Astrocyte of the cerebellum (primary cell): ENCODE measurements at regions of chr18 and their contacts with region 1.

Region 1: GRCh38 chr18:10205151-10205550 is 249.3 kb upstream of the APCDD1 start:
- DNase-seq: no peak
- H3K4me3 ChIP-seq: no peak overlapping the region
- CTCF ChIP-seq: no peak

Region 2: GRCh38 chr18:9240270-9240669 is 964.9 kb before region 1 on chr18:
- in situ Hi-C with region 1: no loop called
- DNase-seq: no peak
- H3K4me3 ChIP-seq: no peak overlapping the region
- CTCF ChIP-seq: no peak

Region 3: DNA sequence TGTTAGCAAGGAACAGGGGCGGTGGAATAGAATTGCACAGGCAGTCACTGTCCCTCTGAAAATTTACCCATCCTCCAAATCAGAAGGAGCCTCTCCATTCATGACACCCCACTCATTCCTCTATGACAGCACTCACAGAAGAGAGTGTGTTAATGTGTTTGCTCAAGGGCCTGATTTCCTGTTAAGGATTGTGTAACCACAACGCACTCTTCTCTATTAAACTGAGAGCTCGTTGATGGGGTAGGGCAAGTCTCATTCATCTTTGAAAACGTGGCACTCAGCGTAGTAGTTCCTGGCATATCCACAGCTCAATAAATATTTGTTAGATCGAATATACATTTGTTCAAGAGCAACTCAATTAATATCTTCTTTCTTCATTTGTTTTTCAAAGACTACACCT is 185.0 kb before region 1 on chr18:
- in situ Hi-C with region 1: no loop called
- DNase-seq: no peak
- H3K4me3 ChIP-seq: no peak overlapping the region
- CTCF ChIP-seq: no peak

Region 4: DNA sequence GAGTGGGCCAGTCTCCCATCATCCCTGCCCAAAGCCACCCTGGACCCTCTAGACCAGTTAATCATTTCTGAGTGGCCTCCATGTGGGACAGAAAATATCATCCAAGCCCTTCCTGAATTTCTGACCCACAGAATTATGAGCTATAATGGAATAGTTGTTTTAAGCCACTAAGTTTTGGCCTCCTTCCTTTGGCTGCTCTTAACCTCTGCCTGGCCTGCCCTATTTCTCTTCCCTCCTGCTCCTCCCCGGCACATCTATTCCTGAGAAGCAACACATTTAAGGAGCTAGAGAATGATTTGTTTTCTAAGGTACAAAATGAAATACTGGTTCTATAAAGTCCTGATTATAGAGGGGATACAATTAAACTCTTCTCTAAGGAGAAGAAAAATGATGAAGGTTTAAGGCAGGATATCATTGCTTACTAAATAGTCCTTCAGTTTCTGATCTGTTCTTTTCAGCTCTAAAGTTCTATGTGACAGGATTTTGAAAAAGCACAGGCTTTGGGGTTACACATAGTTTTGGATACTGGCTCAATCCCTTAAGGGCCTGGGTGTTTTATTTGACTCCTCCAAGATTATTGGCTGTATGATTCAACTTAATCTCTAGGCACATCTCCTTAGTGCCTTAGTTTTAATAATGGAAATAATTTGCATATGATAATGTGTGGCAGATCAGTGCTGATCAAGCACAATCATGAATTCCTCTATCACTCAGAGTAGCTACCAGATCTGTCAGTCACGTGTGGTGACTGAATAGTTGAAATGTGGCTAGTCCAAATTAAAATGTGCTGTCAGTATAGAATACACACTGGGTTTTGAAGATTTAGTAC is 51.0 kb before region 1 on chr18:
- in situ Hi-C with region 1: no loop called
- DNase-seq: no peak
- H3K4me3 ChIP-seq: no peak overlapping the region
- CTCF ChIP-seq: no peak

Region 5: DNA sequence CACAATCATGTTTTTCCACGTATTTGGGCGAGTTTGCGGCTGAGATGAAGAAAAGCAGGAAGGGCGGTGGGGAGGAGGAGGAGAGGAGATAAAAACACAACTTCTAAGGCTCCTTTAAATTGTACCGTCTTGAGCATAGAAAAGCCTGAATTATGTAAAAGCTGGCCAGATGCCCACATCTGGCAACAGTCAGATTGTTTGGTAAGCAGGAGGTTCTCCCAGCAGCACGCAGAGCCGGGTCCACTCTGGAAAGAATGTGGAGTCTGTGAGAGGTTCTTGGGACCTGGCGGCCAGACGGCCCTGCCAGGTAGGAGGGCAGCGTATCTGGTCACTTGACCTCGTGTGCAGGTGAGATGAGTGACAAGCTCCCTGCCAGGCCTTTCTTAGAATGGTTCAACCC is 34.0 kb after region 1 on chr18:
- in situ Hi-C with region 1: no loop called
- DNase-seq: no peak
- H3K4me3 ChIP-seq: no peak overlapping the region
- CTCF ChIP-seq: no peak

Region 6: DNA sequence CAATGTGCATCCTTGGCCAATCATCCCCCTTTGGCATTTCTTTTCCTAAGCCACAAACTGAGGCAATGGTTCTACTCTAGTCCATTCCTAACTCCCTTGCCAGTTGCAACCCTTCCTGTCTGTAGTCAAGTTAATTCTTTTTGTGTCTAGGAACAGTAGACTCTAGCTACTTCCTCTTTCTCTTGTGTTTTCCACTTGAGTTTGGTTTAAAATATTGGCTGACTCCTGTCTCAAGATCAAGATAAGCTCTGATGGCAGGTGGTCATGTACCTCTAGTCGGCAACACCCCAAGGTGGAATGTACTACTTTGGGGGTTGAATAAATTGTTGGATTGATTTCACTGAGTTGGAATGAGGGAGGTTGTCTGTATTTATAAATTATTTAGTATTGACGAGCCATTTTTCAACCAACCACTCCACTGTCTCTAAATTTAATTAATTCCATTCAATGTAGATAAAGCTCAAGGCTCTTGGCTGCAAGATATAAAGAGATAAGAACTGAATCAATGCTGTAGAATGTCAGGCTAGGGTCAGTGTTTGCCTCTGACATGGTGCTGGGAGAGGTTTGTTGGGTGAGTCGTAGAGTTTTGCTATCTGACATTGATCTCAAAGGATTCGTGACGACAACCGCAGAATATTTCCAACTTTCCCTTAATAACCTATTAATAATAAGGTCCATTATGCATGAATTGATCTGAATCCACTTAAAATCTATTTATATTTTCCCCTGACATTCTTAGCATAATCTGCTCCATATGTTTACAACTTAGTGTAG is 60.6 kb after region 1 on chr18:
- in situ Hi-C with region 1: loop called (anchors 5 kb)
- DNase-seq: no peak
- H3K4me3 ChIP-seq: no peak overlapping the region
- CTCF ChIP-seq: no peak